Activated CD4-positive, alpha-beta T cell treated with anti-CD3 and anti-CD28 coated beads for 36 hours (primary cell): ENCODE measurements at regions of chr11 and their contacts with region 1.

Region 1: GRCh38 chr11:118240999-118241768 is 11.0 kb downstream of the MPZL3 start:
- DNase-seq: peak; percentile 82
- ATAC-seq: peak; percentile 87
- H3K4me3 Mint-ChIP-seq: peak overlapping the region; percentile 77
- H3K27ac Mint-ChIP-seq: peak overlapping the region; percentile 94
- H3K4me1 Mint-ChIP-seq: peaks cover 88% of the 10 kb centered on the region
- H3K27me3 Mint-ChIP-seq: no peaks in the 10 kb centered on the region

Region 2: DNA sequence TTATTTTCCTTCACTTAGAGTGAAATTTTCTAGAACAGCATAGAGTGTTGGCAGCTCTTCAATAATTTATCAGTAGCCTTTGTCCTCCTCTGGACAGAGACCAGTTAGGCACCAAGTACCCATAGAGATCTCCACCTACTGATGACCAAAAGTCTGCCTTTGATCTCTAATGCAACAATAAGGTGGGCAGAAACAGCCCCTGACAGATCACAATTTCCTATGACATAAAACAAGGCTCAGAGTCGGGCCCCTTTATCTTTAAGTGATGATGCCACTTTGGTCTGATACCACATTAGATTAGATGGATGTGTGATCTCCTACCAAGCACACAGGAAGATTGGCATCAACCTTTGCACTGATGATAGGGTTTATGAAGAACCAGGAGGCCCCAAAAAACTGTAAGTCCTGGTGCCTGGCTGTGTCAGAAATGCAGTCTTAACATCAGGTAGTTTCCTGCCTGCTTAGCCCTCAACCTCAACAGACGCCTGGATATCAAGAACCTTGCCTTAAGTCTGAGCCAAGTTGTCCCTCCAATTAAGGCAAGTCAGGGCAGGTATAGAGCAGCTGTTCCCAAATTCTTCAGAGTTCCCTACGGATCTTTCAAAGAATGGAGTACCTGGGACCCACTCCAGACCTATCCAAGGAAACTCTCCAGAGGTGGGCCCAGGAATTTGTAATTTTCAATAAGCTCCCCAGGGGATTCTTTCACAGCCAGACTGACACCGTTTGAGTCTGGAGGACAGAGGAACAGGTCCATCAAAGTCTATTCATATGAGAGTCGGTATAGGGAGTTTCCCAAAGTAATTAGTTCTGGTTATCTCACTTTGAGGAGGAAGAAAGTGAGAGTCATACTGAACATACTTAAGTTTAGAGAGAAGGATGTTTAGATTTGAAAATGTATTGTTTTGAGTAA is 194.9 kb before region 1 on chr11:
- CTCF ChIA-PET with region 1: no interaction called
- POLR2A ChIA-PET with region 1: no interaction called
- intact Hi-C with region 1: loop called in 1 of 2 experiments (anchors 5 kb)
- DNase-seq: peak; percentile 49
- ATAC-seq: peak; percentile 76
- H3K4me3 Mint-ChIP-seq: peak overlapping the region; percentile 25
- H3K27ac Mint-ChIP-seq: peak overlapping the region; percentile 76
- H3K4me1 Mint-ChIP-seq: peaks cover 88% of the 10 kb centered on the region
- H3K27me3 Mint-ChIP-seq: no peaks in the 10 kb centered on the region

Region 3: DNA sequence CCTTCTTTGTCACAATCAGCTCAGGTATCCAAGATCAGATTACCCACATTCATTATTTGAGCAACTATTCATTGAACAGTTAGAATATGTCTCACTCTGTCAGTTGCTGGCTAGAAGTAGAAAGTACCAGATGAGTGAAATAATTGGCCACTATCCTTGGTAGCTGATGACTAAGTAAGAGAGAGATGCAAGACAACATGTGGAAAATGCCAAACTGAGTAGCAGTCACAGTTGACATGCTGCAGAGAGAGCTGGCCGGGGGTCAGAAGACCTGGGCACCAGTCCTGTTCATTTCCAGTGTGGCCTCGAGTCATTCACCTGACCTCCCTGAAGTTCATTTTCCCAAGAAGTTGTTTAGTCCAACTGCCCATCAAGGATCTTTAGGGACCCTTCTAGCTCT is 132.0 kb before region 1 on chr11:
- CTCF ChIA-PET with region 1: no interaction called
- POLR2A ChIA-PET with region 1: no interaction called
- intact Hi-C with region 1: no loop called
- DNase-seq: no peak
- ATAC-seq: no peak
- H3K4me3 Mint-ChIP-seq: no peak overlapping the region
- H3K27ac Mint-ChIP-seq: no peak overlapping the region
- H3K4me1 Mint-ChIP-seq: no peaks in the 10 kb centered on the region
- H3K27me3 Mint-ChIP-seq: peaks cover 3% of the 10 kb centered on the region

Region 4: DNA sequence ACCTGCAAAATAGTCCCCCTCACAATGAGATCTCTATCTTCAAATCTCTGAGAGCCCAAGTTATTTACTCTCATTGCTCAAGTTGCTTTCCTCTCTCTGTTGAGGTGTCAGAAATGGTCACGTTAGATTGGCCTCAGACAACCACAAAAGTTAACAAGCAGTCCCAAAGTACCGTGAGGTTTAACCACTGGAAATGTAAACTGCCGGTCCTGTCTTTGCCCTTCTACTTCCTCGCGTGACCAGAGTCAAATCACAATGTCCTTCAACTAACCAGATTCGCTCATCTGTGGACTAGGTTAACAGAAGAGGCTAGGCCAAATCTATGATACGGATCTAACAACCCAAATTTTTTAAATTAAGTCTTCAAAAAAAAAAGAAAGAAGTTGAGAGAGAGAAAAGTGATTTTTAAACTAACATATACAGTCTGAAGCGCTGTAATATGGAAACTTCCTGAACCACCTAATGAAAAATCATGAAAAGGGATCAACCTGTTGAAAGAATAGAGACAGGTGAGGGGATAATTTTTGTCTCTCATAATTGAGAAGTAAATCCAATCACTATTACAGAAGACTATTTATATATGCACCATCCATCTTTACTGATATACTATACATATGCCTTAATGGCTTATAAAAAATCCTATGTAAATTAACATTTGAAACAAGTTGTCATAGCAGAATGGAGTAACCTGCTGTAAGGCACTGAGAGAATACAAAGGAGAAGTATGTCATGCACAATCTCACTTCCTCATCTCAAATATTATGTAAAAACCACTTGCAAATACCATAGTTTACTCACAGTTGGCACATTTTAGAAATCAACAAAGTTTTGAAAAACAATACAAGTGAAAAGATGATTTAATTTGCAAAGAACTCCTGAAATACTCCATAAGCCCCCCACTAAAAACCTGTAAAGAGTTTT is 13.1 kb before region 1 on chr11:
- CTCF ChIA-PET with region 1: interaction called, 16 read pairs
- POLR2A ChIA-PET with region 1: interaction called, 42 read pairs
- intact Hi-C with region 1: loop called (anchors 1 kb)
- DNase-seq: no peak
- ATAC-seq: no peak
- H3K4me3 Mint-ChIP-seq: peak overlapping the region; percentile 15
- H3K27ac Mint-ChIP-seq: no peak overlapping the region
- H3K4me1 Mint-ChIP-seq: peaks cover 49% of the 10 kb centered on the region
- H3K27me3 Mint-ChIP-seq: no peaks in the 10 kb centered on the region

Region 5: GRCh38 chr11:118338637-118339061 is 97.5 kb after region 1 on chr11:
- CTCF ChIA-PET with region 1: no interaction called
- POLR2A ChIA-PET with region 1: interaction called, 5 read pairs
- intact Hi-C with region 1: loop called (anchors 2 to 5 kb)
- DNase-seq: peak; percentile 94
- ATAC-seq: peak; percentile 63
- H3K4me3 Mint-ChIP-seq: peak overlapping the region; percentile 83
- H3K27ac Mint-ChIP-seq: peak overlapping the region; percentile 100
- H3K4me1 Mint-ChIP-seq: peaks cover 45% of the 10 kb centered on the region
- H3K27me3 Mint-ChIP-seq: no peaks in the 10 kb centered on the region